Vagina (tissue), 2 donors: ENCODE measurements at regions of chr5 and their contacts with region 1.

Region 1: GRCh38 chr5:83125560-83125959 is 48.2 kb downstream of the XRCC4 start:
- DNase-seq: no peak
- H3K4me3 ChIP-seq: no peak overlapping the region
- H3K27ac ChIP-seq: no peak overlapping the region
- H3K4me1 ChIP-seq: no peaks in the 10 kb centered on the region
- H3K27me3 ChIP-seq: no peaks in the 10 kb centered on the region
- CTCF ChIP-seq: no peak
- POLR2A ChIP-seq: no peak

Region 2: DNA sequence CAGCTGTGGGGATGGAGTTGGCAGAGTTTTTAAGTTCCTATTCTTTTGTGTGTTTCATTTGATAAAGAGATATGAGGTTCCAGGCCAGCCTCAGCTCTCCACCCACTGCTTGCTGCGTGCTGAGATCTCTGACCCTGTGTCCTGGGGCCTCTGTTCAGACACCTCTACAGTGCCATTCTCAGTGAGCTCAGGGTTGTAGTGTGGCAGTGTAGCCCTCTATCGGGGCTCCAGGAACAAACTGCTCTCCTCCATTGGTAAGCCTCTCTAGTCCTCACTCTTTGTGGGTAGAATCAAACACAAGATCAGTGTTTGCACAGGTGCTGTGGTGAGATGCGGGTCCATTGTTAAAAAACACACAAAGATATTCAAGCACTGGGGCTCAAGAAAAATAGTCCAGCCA is 460.8 kb before region 1 on chr5:
- intact Hi-C with region 1: loop called (anchors 5 kb)
- DNase-seq: no peak
- H3K4me3 ChIP-seq: no peak overlapping the region
- H3K27ac ChIP-seq: no peak overlapping the region
- H3K4me1 ChIP-seq: no peaks in the 10 kb centered on the region
- H3K27me3 ChIP-seq: no peaks in the 10 kb centered on the region
- CTCF ChIP-seq: no peak
- POLR2A ChIP-seq: no peak

Region 3: GRCh38 chr5:83162601-83163000 is 37.0 kb after region 1 on chr5:
- intact Hi-C with region 1: no loop called
- DNase-seq: no peak
- H3K4me3 ChIP-seq: no peak overlapping the region
- H3K27ac ChIP-seq: no peak overlapping the region
- H3K4me1 ChIP-seq: no peaks in the 10 kb centered on the region
- H3K27me3 ChIP-seq: no peaks in the 10 kb centered on the region
- CTCF ChIP-seq: no peak
- POLR2A ChIP-seq: no peak

Region 4: GRCh38 chr5:83387041-83387440 is 261.5 kb after region 1 on chr5:
- intact Hi-C with region 1: no loop called
- DNase-seq: no peak
- H3K4me3 ChIP-seq: no peak overlapping the region
- H3K27ac ChIP-seq: no peak overlapping the region
- H3K4me1 ChIP-seq: no peaks in the 10 kb centered on the region
- H3K27me3 ChIP-seq: no peaks in the 10 kb centered on the region
- CTCF ChIP-seq: no peak
- POLR2A ChIP-seq: no peak